Activated CD8-positive, alpha-beta T cell treated with anti-CD3 and anti-CD28 coated beads for 36 hours (primary cell): ENCODE measurements at regions of chr9 and their contacts with region 1.

Region 1: DNA sequence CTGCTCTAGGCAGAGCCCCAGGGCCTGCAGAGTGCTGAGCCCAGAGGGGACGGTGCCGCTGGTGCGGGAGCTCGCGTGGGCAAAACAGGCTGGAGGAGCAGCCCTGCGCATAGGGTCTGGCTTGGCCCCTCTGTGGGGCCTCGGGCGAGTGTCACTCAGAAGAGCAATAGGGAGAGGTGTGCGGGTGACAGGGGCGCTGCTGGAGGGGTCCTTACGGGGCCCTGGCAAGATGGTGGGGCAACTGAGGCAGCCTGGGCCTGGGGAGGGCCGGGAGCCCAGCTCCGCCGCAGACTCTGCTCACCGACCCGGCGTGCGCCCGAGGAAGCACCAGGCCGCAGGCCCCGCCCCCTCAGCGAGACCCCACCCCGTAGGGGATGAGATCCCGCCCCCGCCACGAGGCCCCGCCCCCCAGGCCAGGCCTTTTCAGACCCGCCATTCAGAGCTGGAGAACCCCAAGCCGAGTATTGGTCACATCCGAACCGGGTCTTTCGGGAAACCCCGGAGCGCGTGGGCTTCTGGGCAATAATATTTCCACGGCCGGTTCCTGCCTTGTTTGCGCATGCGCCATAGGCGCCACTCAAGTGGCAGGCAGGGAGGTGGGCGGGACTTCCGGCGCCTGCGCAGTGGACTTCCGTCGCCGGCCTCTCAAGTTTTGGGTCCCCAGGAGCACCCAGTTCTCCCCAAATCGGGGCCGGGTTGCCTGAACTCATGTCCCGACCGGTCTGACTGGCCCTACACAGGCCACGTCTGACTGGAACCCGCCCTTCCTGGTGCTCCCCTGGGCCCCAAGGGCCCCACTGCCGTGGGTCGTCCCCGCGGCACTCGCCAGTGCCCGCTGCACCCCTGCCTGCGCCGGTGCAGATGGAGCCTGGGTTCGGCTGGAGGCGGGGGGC is 1.3 kb upstream of the RNF208 start:
- DNase-seq: peak; percentile 99
- ATAC-seq: peak; percentile 93
- H3K4me3 Mint-ChIP-seq: peak overlapping the region; percentile 80
- H3K27ac Mint-ChIP-seq: peak overlapping the region; percentile 71
- H3K4me1 Mint-ChIP-seq: peaks cover 11% of the 10 kb centered on the region
- H3K27me3 Mint-ChIP-seq: peaks cover 1% of the 10 kb centered on the region
- CTCF ChIP-seq: no peak

Region 2: DNA sequence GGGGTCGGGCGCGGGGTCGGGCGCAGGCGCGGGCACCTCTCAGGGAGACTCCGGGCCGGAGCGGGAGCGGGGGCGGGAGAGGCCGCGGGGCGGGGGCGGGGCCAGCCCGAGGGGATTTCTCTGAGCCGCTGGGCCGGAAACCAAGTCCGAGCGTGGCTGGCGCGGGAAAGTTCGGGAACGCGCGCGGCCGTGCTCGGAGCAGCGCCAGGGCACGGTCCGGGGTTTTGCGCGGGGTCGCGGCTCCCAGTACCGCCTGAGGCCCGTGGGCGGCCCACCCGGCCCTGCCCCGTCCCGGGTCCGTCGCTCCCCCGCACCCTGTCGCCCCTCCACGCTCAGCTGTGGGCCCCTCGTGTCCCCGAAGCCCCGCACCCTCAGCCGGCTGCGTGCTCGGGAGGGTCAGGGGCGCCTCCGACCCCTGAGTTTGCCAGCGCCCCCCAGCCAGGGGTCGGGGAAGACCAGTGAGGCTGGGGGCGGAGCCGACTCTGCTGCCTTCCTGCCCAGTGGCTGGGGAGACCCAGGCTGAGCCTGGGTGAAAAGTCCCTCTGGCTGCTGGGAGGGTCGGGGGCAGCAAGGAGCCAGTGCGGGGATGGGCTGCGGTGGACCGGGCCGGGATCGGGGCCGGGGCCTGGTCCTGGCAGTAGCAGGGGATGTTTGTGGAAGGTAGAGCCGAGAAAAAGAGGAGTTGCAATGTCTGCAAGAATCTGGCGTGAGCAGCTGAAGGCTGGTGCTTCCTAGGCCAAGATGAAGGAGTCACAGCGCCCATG is 336.5 kb before region 1 on chr9:
- CTCF ChIA-PET with region 1: no interaction called
- POLR2A ChIA-PET with region 1: no interaction called
- intact Hi-C with region 1: no loop called
- DNase-seq: peak; percentile 50
- ATAC-seq: no peak
- H3K4me3 Mint-ChIP-seq: peak overlapping the region; percentile 89
- H3K27ac Mint-ChIP-seq: peak overlapping the region; percentile 84
- H3K4me1 Mint-ChIP-seq: peaks cover 50% of the 10 kb centered on the region
- H3K27me3 Mint-ChIP-seq: no peaks in the 10 kb centered on the region
- CTCF ChIP-seq: no peak

Region 3: GRCh38 chr9:137046098-137046787 is 177.1 kb before region 1 on chr9 and contains the start of gene NPDC1:
- CTCF ChIA-PET with region 1: interaction called, 15 read pairs
- POLR2A ChIA-PET with region 1: no interaction called
- intact Hi-C with region 1: no loop called
- DNase-seq: peak; percentile 92
- ATAC-seq: peak; percentile 84
- H3K4me3 Mint-ChIP-seq: peak within 1 kb of the TSS; percentile 63
- H3K27ac Mint-ChIP-seq: no peak within 1 kb of the TSS
- H3K4me1 Mint-ChIP-seq: peaks cover 10% of the 10 kb centered on the region
- H3K27me3 Mint-ChIP-seq: peaks cover 42% of the 10 kb centered on the region
- CTCF ChIP-seq: peak; percentile 83
- total RNA-seq, gene NPDC1: 18.2 to 21.2 TPM

Region 4: GRCh38 chr9:137095664-137096517 is 127.4 kb before region 1 on chr9:
- CTCF ChIA-PET with region 1: interaction called, 11 read pairs
- POLR2A ChIA-PET with region 1: interaction called, 4 read pairs
- intact Hi-C with region 1: no loop called
- DNase-seq: peak; percentile 95
- ATAC-seq: peak; percentile 97
- H3K4me3 Mint-ChIP-seq: peak overlapping the region; percentile 78
- H3K27ac Mint-ChIP-seq: peak overlapping the region; percentile 91
- H3K4me1 Mint-ChIP-seq: peaks cover 23% of the 10 kb centered on the region
- H3K27me3 Mint-ChIP-seq: no peaks in the 10 kb centered on the region
- CTCF ChIP-seq: peak; percentile 74

Region 5: DNA sequence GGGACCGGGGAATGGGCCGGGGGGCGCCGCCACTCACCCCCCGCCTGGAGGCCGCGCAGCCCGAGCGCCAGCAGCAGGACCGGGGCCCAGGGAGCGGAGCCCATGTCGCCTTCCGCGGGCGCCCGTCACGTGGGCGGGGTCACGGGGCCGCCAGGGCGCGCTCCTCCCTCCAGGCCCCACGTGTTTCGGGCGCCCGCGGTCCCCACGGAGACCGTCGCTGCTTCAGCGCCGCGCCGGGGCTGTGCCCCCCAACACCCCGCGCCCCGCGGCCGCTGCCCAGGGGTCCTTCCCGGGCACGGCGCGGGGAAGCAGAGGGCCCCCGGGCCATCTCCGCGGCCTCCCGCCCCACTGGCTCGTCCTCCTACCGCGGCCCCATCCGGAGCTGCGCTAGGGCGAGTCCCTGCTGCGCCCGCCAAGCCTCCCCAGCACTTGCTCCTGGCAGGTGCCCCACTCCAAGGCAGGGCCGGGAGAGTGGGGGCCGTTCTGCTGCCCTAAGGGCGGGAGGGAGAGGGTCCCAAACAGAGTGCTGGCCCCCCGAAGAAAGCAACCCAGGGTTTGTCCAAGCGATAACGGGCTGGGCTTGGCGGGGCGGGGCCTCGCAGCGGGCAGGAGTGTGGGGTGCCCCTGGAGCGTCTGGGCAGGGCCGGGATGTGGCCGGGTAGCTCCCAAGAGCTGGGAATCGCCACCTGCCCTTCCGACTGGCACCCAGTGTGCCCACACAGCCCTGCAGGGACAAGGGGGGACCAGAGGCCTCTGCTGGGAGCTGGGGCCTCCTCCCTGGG is 108.5 kb before region 1 on chr9 and contains the start of gene DPP7:
- CTCF ChIA-PET with region 1: interaction called, 16 read pairs
- POLR2A ChIA-PET with region 1: interaction called, 4 read pairs
- intact Hi-C with region 1: no loop called
- DNase-seq: peak; percentile 81
- ATAC-seq: peak; percentile 85
- H3K4me3 Mint-ChIP-seq: peak within 1 kb of the TSS; percentile 75
- H3K27ac Mint-ChIP-seq: peak within 1 kb of the TSS; percentile 64
- H3K4me1 Mint-ChIP-seq: peaks cover 10% of the 10 kb centered on the region
- H3K27me3 Mint-ChIP-seq: no peaks in the 10 kb centered on the region
- CTCF ChIP-seq: no peak
- total RNA-seq, gene DPP7: 222 to 227 TPM

Region 6: GRCh38 chr9:137123468-137123837 is 99.9 kb before region 1 on chr9:
- CTCF ChIA-PET with region 1: interaction called, 16 read pairs
- POLR2A ChIA-PET with region 1: interaction called, 4 read pairs
- intact Hi-C with region 1: loop called (anchors 5 kb)
- DNase-seq: no peak
- ATAC-seq: no peak
- H3K4me3 Mint-ChIP-seq: no peak overlapping the region
- H3K27ac Mint-ChIP-seq: no peak overlapping the region
- H3K4me1 Mint-ChIP-seq: peaks cover 26% of the 10 kb centered on the region
- H3K27me3 Mint-ChIP-seq: no peaks in the 10 kb centered on the region
- CTCF ChIP-seq: no peak

Region 7: DNA sequence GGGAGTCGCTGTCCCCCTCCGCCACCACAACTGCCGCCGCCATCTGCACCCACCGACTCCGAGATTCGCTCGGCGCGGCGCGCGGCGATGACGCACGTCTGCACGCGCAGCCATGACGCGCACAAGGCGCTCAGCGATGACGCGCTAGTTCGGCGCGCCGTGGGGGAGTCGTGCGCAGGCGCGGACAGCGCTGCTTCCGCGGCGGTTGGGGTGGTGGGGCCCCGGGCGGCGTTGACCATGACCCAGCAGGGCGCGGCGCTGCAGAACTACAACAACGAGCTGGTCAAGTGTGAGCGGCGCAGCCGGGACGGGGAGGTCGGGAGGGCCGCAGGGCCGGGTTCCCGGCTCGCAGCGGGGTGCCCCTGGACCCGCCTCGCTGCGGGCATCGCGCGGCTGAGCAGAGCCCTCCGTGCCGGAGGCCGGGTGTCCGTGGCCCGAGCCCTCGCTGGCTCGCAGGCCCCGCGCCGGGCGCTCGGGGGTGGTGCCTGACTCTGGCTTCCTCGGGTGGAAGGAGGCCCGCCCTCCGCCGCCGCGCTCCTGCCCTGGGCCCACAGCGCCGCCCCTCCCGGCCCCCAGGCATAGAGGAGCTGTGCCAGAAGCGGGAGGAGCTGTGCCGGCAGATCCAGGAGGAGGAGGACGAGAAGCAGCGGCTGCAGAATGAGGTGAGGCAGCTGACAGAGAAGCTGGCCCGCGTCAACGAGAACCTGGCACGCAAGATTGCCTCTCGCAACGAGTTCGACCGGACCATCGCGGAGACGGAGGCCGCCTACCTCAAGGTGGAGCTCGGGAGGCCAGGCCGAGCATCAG is 34.6 kb before region 1 on chr9 and contains the starts of genes ANAPC2 and SSNA1:
- CTCF ChIA-PET with region 1: interaction called, 11 read pairs
- POLR2A ChIA-PET with region 1: interaction called, 6 read pairs
- intact Hi-C with region 1: no loop called
- DNase-seq: peak; percentile 92
- ATAC-seq: peak; percentile 84
- H3K4me3 Mint-ChIP-seq: peak within 1 kb of the TSS; percentile 91
- H3K27ac Mint-ChIP-seq: peak within 1 kb of the TSS; percentile 94
- H3K4me1 Mint-ChIP-seq: peaks cover 32% of the 10 kb centered on the region
- H3K27me3 Mint-ChIP-seq: no peaks in the 10 kb centered on the region
- CTCF ChIP-seq: peak; percentile 53
- total RNA-seq, gene ANAPC2: 38.6 to 39.6 TPM
- total RNA-seq, gene SSNA1: 53.3 to 58.4 TPM

Region 8: GRCh38 chr9:137200311-137201204 is 22.8 kb before region 1 on chr9 and contains the start of gene TPRN:
- CTCF ChIA-PET with region 1: interaction called, 3 read pairs
- POLR2A ChIA-PET with region 1: interaction called, 44 read pairs
- intact Hi-C with region 1: no loop called
- DNase-seq: peak; percentile 99
- ATAC-seq: peak; percentile 98
- H3K4me3 Mint-ChIP-seq: peak within 1 kb of the TSS; percentile 82
- H3K27ac Mint-ChIP-seq: peak within 1 kb of the TSS; percentile 77
- H3K4me1 Mint-ChIP-seq: peaks cover 22% of the 10 kb centered on the region
- H3K27me3 Mint-ChIP-seq: no peaks in the 10 kb centered on the region
- CTCF ChIP-seq: no peak
- total RNA-seq, gene TPRN: 5.7 to 6.6 TPM

Region 9: GRCh38 chr9:137267933-137268355 is 44.6 kb after region 1 on chr9:
- CTCF ChIA-PET with region 1: no interaction called
- POLR2A ChIA-PET with region 1: no interaction called
- intact Hi-C with region 1: no loop called
- DNase-seq: no peak
- ATAC-seq: no peak
- H3K4me3 Mint-ChIP-seq: no peak overlapping the region
- H3K27ac Mint-ChIP-seq: no peak overlapping the region
- H3K4me1 Mint-ChIP-seq: peaks cover 8% of the 10 kb centered on the region
- H3K27me3 Mint-ChIP-seq: no peaks in the 10 kb centered on the region
- CTCF ChIP-seq: no peak

Region 10: DNA sequence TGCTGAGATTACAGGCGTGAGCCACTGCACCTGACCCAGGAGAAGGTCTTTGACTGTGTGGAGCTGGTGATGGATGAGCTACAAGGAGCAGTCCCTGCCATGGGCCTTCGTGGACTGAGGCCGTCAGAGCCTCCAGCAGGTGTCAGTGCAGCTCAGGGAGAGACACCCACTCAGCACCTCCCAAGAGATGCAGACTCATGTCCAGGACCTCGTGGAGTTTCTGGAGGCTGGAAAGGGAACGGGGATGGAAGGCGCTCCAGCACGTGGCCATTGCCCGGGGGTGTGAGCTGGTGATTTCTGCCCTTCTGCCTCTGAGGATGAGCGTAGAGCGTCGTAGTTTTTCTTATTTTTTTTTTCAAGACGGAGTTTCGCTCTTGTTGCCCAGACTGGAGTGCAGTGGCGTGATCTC is 63.7 kb after region 1 on chr9:
- CTCF ChIA-PET with region 1: no interaction called
- POLR2A ChIA-PET with region 1: no interaction called
- intact Hi-C with region 1: no loop called
- DNase-seq: peak; percentile 53
- ATAC-seq: peak; percentile 71
- H3K4me3 Mint-ChIP-seq: no peak overlapping the region
- H3K27ac Mint-ChIP-seq: no peak overlapping the region
- H3K4me1 Mint-ChIP-seq: no peaks in the 10 kb centered on the region
- H3K27me3 Mint-ChIP-seq: peaks cover 6% of the 10 kb centered on the region
- CTCF ChIP-seq: no peak

Region 11: DNA sequence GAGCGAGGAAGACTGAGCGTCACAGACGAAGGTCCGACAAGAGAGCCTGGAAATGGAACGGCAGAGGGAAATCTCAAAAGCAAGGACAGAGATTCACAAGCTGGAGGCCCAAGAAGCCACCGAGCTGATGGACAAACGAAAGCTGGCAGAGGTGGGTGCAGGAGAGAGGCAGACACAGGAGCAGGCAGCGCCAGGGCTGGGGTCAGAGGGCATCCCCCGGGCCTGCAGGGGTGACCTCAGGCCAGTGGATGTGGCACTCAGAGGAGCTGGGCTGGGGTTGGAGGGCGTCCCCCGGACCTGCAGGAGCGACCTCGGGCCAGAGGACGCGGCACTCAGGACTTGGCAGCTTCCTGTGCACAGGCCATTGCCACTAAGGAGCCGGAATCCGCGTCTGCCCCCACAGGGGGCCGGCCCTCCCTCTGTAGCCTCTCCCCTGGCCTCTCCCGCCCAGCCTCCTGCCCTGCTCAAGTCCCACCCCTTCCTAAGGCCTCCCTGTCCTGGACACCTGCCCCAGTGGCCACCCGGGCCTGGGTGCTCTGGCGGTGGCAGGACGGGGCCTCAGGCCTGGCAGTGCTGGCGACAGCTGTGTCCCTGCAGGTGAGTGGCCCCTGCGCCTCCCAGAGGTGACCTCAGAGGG is 159.2 kb after region 1 on chr9:
- CTCF ChIA-PET with region 1: no interaction called
- POLR2A ChIA-PET with region 1: no interaction called
- intact Hi-C with region 1: no loop called
- DNase-seq: no peak
- ATAC-seq: no peak
- H3K4me3 Mint-ChIP-seq: no peak overlapping the region
- H3K27ac Mint-ChIP-seq: no peak overlapping the region
- H3K4me1 Mint-ChIP-seq: peaks cover 7% of the 10 kb centered on the region
- H3K27me3 Mint-ChIP-seq: no peaks in the 10 kb centered on the region
- CTCF ChIP-seq: no peak